ENCODE measurements at regions of chr1 and their contacts with region 1.

Region 1: DNA sequence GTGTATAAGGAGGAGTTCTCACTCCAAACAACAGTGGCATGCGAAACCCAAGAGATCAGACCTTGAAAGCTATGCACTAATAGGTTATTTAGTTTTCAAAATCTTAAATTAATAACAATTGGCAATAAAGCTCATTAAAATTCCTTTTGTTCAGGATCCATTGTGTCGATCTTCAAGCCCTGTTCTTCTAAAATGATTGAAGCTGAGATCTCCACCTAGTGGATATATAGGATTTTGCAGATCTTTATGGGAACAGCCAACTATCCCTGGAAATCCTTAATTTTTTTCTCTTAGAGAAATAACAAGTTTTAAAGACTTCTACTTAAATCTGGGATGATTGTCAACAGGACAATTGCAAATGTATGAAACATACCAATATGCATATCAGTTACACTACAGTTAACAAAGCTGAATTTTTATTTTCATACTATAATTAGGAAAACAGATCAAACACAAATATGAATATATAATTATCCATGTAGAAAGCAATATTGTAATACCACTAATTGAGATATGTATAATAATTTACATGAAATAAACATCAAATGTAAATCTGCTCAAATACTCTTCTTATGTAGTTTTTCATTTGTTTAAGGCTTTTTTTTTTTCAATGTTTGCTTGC is 43.3 kb downstream of the LRRC53 start:
- DNase-seq: peak; percentile 53
- H3K4me3 ChIP-seq: no peak overlapping the region
- H3K27ac ChIP-seq: no peak overlapping the region
- H3K4me1 ChIP-seq: no peaks in the 10 kb centered on the region
- H3K27me3 ChIP-seq: no peaks in the 10 kb centered on the region
- CTCF ChIP-seq: peak; percentile 27 to 30
- POLR2A ChIP-seq: no peak

Region 2: GRCh38 chr1:73839922-73840321 is 629.2 kb before region 1 on chr1:
- CTCF ChIA-PET with region 1: interaction called, 3 read pairs
- POLR2A ChIA-PET with region 1: no interaction called
- dilution Hi-C with region 1: no loop called
- intact Hi-C with region 1: loop called (anchors 2 kb)
- DNase-seq: no peak
- H3K4me3 ChIP-seq: no peak overlapping the region
- H3K27ac ChIP-seq: no peak overlapping the region
- H3K4me1 ChIP-seq: no peaks in the 10 kb centered on the region
- H3K27me3 ChIP-seq: no peaks in the 10 kb centered on the region
- CTCF ChIP-seq: no peak
- POLR2A ChIP-seq: no peak

Region 3: DNA sequence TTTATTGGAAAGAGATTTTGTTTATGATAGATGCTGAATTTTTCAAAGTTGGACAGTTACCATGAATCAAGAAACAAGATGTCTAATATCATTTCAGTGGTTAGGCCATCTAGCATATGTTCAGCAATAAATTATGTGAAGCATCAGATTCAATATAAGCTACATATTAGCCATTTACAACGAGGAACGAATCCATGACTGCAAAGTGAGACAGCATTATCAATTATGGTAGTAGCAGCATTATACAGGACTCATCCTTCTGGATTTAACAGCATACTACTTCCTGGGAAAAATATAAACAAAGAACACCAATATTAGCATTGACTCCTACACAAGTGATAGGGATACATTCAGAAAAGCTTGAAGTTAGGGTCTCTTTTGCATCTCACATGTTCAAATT is 15.8 kb before region 1 on chr1:
- CTCF ChIA-PET with region 1: no interaction called
- POLR2A ChIA-PET with region 1: no interaction called
- dilution Hi-C with region 1: no loop called
- intact Hi-C with region 1: no loop called
- DNase-seq: no peak
- H3K4me3 ChIP-seq: no peak overlapping the region
- H3K27ac ChIP-seq: no peak overlapping the region
- H3K4me1 ChIP-seq: no peaks in the 10 kb centered on the region
- H3K27me3 ChIP-seq: no peaks in the 10 kb centered on the region
- CTCF ChIP-seq: no peak
- POLR2A ChIP-seq: no peak

Measured in endothelial cell of umbilical vein (primary cell).